Psoas muscle (tissue), 8 donors: ENCODE measurements at regions of chr4 and their contacts with region 1.

Region 1: DNA sequence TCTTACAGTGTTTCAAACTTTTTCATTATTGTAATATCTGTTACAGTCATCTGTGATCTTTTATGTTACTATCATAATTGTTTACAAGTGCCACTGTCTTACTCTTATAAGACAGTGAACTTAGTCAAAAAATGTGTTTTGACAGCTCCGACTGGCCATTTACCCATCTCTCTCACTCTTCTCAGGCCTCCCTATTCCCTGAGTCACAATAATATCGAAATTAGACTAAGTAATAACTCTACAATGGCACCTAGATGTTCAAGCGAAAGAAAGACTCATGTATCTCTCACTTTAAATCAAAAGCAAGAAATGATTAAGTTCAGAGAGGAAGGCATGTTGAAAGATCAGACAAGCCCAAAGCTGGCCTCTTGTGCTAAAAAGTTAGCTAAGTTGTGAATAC is 184.2 kb downstream of the CDS1 start:
- DNase-seq: no peak
- ATAC-seq: no peak
- H3K4me3 ChIP-seq: no peak overlapping the region
- H3K27ac ChIP-seq: no peak overlapping the region
- H3K4me1 ChIP-seq: no peaks in the 10 kb centered on the region
- H3K27me3 ChIP-seq: no peaks in the 10 kb centered on the region
- CTCF ChIP-seq: no peak

Region 2: DNA sequence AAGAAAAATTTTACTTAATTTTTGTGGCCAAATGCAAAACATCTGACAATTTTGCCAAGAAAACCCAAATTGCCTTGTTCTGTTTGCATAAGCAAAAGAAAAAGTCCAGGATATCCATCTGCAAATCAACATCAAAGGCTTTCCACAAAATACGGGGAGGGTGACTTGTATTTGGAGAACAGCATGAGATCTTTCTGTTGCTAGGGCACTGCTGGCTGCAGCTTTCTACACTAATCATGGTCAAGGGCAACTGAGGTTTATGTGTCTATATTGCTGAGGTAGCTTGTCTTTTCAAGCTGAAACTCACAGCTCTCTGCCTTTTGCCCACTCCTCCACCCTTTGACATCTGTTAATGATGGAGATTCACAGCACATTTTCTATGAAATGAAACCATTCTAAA is 657.1 kb before region 1 on chr4:
- intact Hi-C with region 1: no loop called
- DNase-seq: no peak
- ATAC-seq: no peak
- H3K4me3 ChIP-seq: no peak overlapping the region
- H3K27ac ChIP-seq: no peak overlapping the region
- H3K4me1 ChIP-seq: no peaks in the 10 kb centered on the region
- H3K27me3 ChIP-seq: no peaks in the 10 kb centered on the region
- CTCF ChIP-seq: no peak

Region 3: DNA sequence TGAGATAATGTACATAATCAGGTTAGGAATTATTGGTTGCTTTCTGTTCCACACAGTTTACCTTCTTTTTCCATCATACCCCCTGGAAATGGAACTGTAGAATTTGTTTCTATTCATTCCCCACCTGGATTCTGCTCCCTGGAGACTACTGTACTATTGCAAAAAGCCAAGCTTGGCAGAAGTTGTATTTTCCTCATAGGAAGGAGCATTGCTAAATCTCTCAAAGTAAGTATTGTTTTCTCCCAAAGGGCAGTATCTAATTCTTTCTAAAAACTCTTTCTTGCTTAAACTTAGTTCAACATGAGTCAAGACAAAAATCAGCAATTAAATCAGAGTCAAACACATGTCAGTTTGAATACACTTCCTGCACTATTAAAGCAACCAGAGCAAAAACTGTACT is 48.1 kb before region 1 on chr4:
- intact Hi-C with region 1: loop called in 1 of 2 experiments (anchors 2 kb)
- DNase-seq: no peak
- ATAC-seq: peak in 1 of 4 donors; percentile 50
- H3K4me3 ChIP-seq: no peak overlapping the region
- H3K27ac ChIP-seq: no peak overlapping the region
- H3K4me1 ChIP-seq: no peaks in the 10 kb centered on the region
- H3K27me3 ChIP-seq: no peaks in the 10 kb centered on the region
- CTCF ChIP-seq: no peak